Activated naive CD4-positive, alpha-beta T cell treated with anti-CD3 and anti-CD28 coated beads for 36 hours (primary cell): ENCODE measurements at regions of chr3 and their contacts with region 1.

Region 1: GRCh38 chr3:177426878-177427495 is 229.7 kb upstream of the TBL1XR1 start:
- DNase-seq: peak; percentile 85
- H3K4me3 Mint-ChIP-seq: peak overlapping the region; percentile 40
- H3K27ac Mint-ChIP-seq: peak overlapping the region; percentile 92
- H3K4me1 Mint-ChIP-seq: peaks cover 29% of the 10 kb centered on the region
- H3K27me3 Mint-ChIP-seq: peaks cover 2% of the 10 kb centered on the region

Region 2: GRCh38 chr3:177057768-177058167 is 369.2 kb before region 1 on chr3:
- CTCF ChIA-PET with region 1: interaction called, 3 read pairs
- intact Hi-C with region 1: loop called (anchors 1 kb)
- DNase-seq: peak; percentile 84
- H3K4me3 Mint-ChIP-seq: no peak overlapping the region
- H3K27ac Mint-ChIP-seq: no peak overlapping the region
- H3K4me1 Mint-ChIP-seq: peaks cover 32% of the 10 kb centered on the region
- H3K27me3 Mint-ChIP-seq: no peaks in the 10 kb centered on the region

Region 3: GRCh38 chr3:177337541-177338331 is 89.3 kb before region 1 on chr3:
- CTCF ChIA-PET with region 1: no interaction called
- intact Hi-C with region 1: loop called (anchors 1 kb)
- DNase-seq: peak; percentile 91
- H3K4me3 Mint-ChIP-seq: no peak overlapping the region
- H3K27ac Mint-ChIP-seq: peak overlapping the region; percentile 42
- H3K4me1 Mint-ChIP-seq: peaks cover 36% of the 10 kb centered on the region
- H3K27me3 Mint-ChIP-seq: peaks cover 5% of the 10 kb centered on the region

Region 4: GRCh38 chr3:177538750-177539730 is 112.1 kb after region 1 on chr3:
- CTCF ChIA-PET with region 1: no interaction called
- intact Hi-C with region 1: loop called (anchors 1 kb)
- DNase-seq: peak; percentile 22
- H3K4me3 Mint-ChIP-seq: peak overlapping the region; percentile 32
- H3K27ac Mint-ChIP-seq: peak overlapping the region; percentile 48
- H3K4me1 Mint-ChIP-seq: peaks cover 27% of the 10 kb centered on the region
- H3K27me3 Mint-ChIP-seq: no peaks in the 10 kb centered on the region

Region 5: DNA sequence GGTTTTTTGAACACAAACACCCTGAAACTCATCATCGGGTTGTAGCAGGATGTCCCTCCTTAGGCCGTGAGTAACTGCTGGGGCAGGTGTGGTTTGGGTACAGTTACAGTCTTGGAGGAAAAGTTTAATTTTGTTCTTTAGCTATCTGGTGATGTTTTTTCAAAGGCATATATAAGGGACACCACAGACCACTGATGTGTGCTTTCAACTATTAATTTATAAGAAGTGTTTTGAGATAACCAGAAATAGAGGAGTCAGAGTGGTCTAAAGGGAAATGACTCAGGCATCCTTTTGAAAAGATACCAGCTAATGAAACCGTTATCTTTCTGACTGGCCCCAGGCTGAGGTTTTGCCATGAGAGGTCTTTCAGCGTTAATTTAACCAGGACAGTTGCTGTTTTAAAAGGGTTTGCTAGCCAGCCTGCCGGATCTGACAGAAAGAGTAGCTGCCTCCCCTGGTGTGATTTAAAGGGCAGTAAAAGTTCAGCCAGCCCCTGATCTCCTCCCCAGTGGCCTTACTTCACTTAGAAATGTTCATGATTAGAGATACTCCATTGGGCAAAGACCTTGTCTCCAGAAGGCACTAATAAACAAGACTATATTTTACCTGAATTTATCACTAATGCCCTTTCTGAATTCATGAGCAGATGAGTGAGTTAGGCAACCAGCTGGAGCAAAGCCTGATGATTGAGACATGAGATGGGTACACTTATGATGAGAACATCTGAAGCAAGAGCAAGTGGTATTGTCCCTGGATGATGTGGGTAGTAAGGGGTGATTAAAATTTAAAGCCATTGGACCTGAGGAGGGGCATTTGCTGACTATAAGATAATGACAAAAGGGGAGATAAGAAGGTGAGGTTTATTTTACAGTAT is 252.8 kb after region 1 on chr3:
- CTCF ChIA-PET with region 1: no interaction called
- intact Hi-C with region 1: loop called (anchors 1 kb)
- DNase-seq: peak; percentile 47
- H3K4me3 Mint-ChIP-seq: no peak overlapping the region
- H3K27ac Mint-ChIP-seq: no peak overlapping the region
- H3K4me1 Mint-ChIP-seq: peaks cover 20% of the 10 kb centered on the region
- H3K27me3 Mint-ChIP-seq: no peaks in the 10 kb centered on the region

Region 6: DNA sequence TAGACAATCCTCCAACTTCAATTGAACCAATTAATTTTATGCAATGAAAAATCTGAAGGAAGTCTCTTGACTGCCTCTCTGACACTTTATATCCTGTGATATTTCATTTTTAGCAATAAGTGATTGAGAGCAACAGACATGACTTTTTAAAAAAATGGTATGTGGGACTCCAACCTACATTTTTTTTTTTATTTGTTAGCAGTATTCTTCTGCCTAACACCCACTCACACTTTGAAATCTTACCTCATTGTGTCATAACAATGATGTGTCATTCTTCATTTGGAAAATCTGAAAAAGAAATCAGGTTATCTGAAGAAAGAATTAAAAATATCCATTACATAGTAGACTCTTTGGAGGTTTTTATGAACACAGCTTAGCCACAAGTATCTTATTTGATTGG is 568.0 kb after region 1 on chr3:
- CTCF ChIA-PET with region 1: no interaction called
- intact Hi-C with region 1: loop called (anchors 2 kb)
- DNase-seq: no peak
- H3K4me3 Mint-ChIP-seq: no peak overlapping the region
- H3K27ac Mint-ChIP-seq: peak overlapping the region; percentile 67
- H3K4me1 Mint-ChIP-seq: peaks cover 30% of the 10 kb centered on the region
- H3K27me3 Mint-ChIP-seq: no peaks in the 10 kb centered on the region

Region 7: GRCh38 chr3:178352326-178353005 is 925.5 kb after region 1 on chr3:
- CTCF ChIA-PET with region 1: no interaction called
- intact Hi-C with region 1: no loop called
- DNase-seq: no peak
- H3K4me3 Mint-ChIP-seq: no peak overlapping the region
- H3K27ac Mint-ChIP-seq: no peak overlapping the region
- H3K4me1 Mint-ChIP-seq: no peaks in the 10 kb centered on the region
- H3K27me3 Mint-ChIP-seq: no peaks in the 10 kb centered on the region